Endothelial cell of umbilical vein (primary cell): ENCODE measurements at regions of chr15 and their contacts with region 1.

Region 1: GRCh38 chr15:80179025-80179759 is 26.4 kb downstream of the FAH start:
- DNase-seq: peak; percentile 91
- H3K4me3 ChIP-seq: no peak overlapping the region
- H3K27ac ChIP-seq: peak overlapping the region; percentile 41
- H3K4me1 ChIP-seq: peaks cover 31% of the 10 kb centered on the region
- H3K27me3 ChIP-seq: no peaks in the 10 kb centered on the region
- CTCF ChIP-seq: no peak
- POLR2A ChIP-seq: no peak

Region 2: DNA sequence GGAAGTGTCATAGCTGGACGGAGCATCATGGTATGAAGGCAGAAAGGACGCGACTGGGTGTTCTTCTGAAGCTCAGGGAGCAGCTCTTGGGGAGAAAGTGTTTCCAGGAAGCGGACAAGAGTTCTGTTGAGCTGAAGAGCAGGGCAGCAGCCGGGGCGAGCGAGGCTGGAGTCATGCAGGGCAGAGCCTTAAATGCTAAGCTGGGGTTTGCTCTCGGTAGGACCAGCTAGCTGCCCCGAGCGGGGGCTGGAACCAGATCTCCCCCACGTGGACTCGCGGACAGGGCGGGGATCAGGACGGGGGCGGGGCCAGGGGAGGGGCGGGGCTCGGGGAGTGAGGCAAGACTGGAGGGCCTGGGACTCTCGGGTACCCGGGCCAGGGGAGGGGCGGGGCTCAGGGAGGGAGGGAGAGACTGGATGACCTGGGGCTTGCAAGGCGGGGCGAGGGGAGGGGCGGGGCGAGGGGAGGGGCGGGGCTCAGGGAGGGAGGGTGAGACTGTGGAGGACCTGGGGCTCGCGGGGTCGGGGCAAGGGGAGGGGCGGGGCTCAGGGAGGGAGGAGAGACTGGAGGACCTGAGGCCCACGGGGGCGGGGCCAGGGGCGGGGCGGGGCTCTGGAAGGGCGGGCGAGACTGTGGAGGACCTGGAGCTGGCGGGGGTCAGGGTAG is 26.9 kb before region 1 on chr15:
- CTCF ChIA-PET with region 1: interaction called, 30 read pairs
- POLR2A ChIA-PET with region 1: no interaction called
- dilution Hi-C with region 1: no loop called
- intact Hi-C with region 1: loop called (anchors 1 kb)
- DNase-seq: peak; percentile 86
- H3K4me3 ChIP-seq: peak overlapping the region in 2 of 3 experiments; percentile 17 to 75
- H3K27ac ChIP-seq: no peak overlapping the region
- H3K4me1 ChIP-seq: peaks cover 9% of the 10 kb centered on the region
- H3K27me3 ChIP-seq: peaks cover 0 to 2% of the 10 kb centered on the region in 2 experiments
- CTCF ChIP-seq: no peak
- POLR2A ChIP-seq: no peak